SK-N-SH (cell line): ENCODE measurements at regions of chr7 and their contacts with region 1.

Region 1: GRCh38 chr7:5665094-5666025 is 116.1 kb downstream of the RNF216 start:
- DNase-seq: peak; percentile 80
- H3K4me3 ChIP-seq: no peak overlapping the region; a peak in 1 of 4 replicates
- H3K27ac ChIP-seq: 0 out of 4 replicates have a peak overlapping the region, but pooled peaks have one; percentile 9 to 11
- H3K4me1 ChIP-seq: peaks cover 6 to 35% of the 10 kb centered on the region in 2 experiments; a peak in 2 of 4 replicates
- H3K27me3 ChIP-seq: no peaks in the 10 kb centered on the region
- CTCF ChIP-seq: peak; percentile 99
- EP300 ChIP-seq: no peak
- RAD21 ChIP-seq: peak; percentile 100

Region 2: DNA sequence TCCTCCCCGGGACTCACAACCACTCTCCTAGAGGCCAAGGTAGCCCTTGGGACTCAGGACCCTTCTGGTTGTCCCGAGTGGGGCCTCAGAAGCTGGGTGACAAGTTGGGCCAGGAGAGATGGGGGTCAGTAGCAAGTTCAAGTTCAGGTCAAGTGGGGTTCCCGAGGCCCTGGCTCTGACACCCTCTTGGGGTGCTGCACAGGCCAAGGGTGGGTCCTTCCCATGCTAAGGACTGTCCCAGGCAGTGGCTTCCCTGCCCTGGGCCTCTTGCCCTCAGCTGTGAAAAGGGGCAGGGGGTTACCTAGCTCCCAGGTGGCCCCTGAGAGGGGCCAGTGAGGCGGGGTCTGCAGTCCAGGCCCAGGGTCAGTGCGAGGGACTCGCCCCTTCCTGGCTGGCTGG is 126.3 kb before region 1 on chr7:
- CTCF ChIA-PET with region 1: interaction called, 11 read pairs
- POLR2A ChIA-PET with region 1: no interaction called
- DNase-seq: no peak
- H3K4me3 ChIP-seq: no peak overlapping the region
- H3K27ac ChIP-seq: no peak overlapping the region
- H3K4me1 ChIP-seq: no peaks in the 10 kb centered on the region
- H3K27me3 ChIP-seq: no peaks in the 10 kb centered on the region
- CTCF ChIP-seq: no peak
- EP300 ChIP-seq: no peak
- RAD21 ChIP-seq: no peak

Region 3: GRCh38 chr7:5615190-5616070 is 49.9 kb before region 1 on chr7:
- CTCF ChIA-PET with region 1: interaction called, 33 read pairs
- POLR2A ChIA-PET with region 1: interaction called, 4 read pairs
- DNase-seq: peak; percentile 38
- H3K4me3 ChIP-seq: no peak overlapping the region
- H3K27ac ChIP-seq: no peak overlapping the region
- H3K4me1 ChIP-seq: no peaks in the 10 kb centered on the region; a peak in 1 of 4 replicates
- H3K27me3 ChIP-seq: no peaks in the 10 kb centered on the region
- CTCF ChIP-seq: no peak
- EP300 ChIP-seq: no peak
- RAD21 ChIP-seq: no peak

Region 4: DNA sequence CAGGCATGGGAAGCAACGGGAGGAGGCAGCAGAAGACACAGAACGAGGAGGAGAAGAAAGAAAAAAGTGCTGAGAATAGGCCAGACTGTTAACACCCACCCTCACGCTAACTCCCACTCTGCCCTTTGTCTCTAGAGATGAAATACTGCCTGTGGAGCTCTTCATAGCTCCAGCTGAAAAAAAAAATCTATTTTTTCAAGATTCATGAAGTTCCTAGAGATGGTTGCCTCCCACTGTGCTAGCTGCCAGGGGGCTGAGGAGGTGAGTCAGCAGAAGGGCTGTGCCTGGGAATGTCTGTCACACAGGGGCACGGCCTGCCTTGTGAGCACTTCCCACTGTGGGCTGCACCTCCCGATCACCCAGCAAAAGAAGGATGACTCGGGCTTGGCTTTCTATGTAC is 28.4 kb before region 1 on chr7:
- CTCF ChIA-PET with region 1: interaction called, 122 read pairs
- POLR2A ChIA-PET with region 1: no interaction called
- DNase-seq: peak; percentile 50
- H3K4me3 ChIP-seq: no peak overlapping the region
- H3K27ac ChIP-seq: peak overlapping the region; percentile 97 to 99
- H3K4me1 ChIP-seq: peaks cover 51 to 65% of the 10 kb centered on the region in 2 experiments
- H3K27me3 ChIP-seq: no peaks in the 10 kb centered on the region
- CTCF ChIP-seq: no peak
- EP300 ChIP-seq: 0 out of 4 replicates have a peak, but pooled peaks of 1 of the 2 experiments have one; percentile 25
- RAD21 ChIP-seq: no peak

Region 5: DNA sequence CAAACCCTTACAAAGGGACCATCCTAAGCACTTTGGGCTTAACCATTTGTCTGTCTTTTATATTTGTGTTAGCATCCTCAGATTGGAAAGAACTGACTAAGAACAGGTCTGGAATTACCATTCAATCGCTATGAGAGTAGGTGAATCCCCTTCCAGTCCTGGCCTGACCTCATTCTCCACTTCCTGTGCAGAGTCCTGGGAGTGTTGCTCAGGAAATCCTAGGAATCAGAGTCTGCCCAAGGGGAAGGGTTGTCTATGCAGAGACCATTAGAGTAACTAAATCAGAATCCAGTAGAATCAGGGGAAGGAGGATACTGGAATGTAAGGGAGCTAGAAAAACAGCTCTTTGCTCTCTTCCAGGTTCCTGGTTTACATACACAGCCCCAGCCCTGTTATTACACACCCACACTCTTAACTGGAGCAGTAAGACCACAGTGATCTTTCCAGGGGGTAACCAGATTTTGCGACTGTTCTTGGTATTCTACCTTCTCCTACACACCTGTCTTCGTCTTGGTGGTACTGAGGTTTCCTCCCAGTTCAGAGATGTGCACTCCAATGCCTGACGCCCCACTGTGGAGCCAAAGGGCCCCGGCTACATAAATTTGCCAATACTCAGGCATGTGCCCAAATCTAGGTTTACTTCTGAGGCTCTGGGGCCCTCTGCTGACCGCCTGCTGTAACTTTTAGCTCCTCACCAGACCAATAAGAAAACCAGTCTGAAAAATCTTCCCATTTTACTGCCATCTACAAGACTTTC is 12.4 kb after region 1 on chr7:
- CTCF ChIA-PET with region 1: interaction called, 123 read pairs
- POLR2A ChIA-PET with region 1: interaction called, 3 read pairs
- DNase-seq: peak; percentile 80
- H3K4me3 ChIP-seq: peak overlapping the region in 1 of 2 experiments; percentile 8; a peak in 2 of 4 replicates
- H3K27ac ChIP-seq: peak overlapping the region; percentile 13 to 45; a peak in 3 of 4 replicates
- H3K4me1 ChIP-seq: peaks cover 16 to 23% of the 10 kb centered on the region in 2 experiments
- H3K27me3 ChIP-seq: no peaks in the 10 kb centered on the region
- CTCF ChIP-seq: peak; percentile 97
- EP300 ChIP-seq: no peak
- RAD21 ChIP-seq: peak; percentile 94

Region 6: DNA sequence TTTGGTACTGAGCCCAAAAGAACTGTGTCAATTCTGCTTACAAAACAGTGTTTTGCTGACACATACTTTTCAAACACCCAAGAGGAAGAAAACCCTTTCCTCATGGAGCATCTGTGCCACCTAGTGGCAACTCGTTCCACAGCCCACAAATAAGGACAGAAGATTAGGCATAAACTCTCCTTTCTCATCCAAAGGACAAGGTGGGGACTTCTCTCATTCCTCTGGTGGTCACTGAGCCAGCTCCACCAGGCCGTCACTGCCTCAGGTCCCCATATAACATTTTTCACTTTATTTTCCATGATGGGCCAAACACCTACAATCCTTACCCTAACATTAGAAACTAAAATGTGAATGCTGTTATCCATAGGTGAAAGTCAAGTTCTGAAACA is 39.2 kb after region 1 on chr7:
- CTCF ChIA-PET with region 1: interaction called, 70 read pairs
- POLR2A ChIA-PET with region 1: no interaction called
- DNase-seq: peak; percentile 75
- H3K4me3 ChIP-seq: no peak overlapping the region
- H3K27ac ChIP-seq: peak overlapping the region; percentile 6 to 7; a peak in 3 of 4 replicates
- H3K4me1 ChIP-seq: peaks cover 9 to 13% of the 10 kb centered on the region in 2 experiments; a peak in 3 of 4 replicates
- H3K27me3 ChIP-seq: no peaks in the 10 kb centered on the region
- CTCF ChIP-seq: peak; percentile 99
- EP300 ChIP-seq: no peak
- RAD21 ChIP-seq: peak; percentile 98